ENCODE measurements at regions of chr20 and their contacts with region 1.

Region 1: GRCh38 chr20:50509935-50510705 is at the start of gene PTPN1:
- DNase-seq: peak; percentile 100
- H3K4me3 ChIP-seq: peak within 1 kb of the TSS; percentile 98
- H3K4me3 Mint-ChIP-seq: peak within 1 kb of the TSS; percentile 99
- H3K27ac Mint-ChIP-seq: peak within 1 kb of the TSS; percentile 97
- H3K4me1 ChIP-seq: peaks cover 36% of the 10 kb centered on the region
- H3K4me1 Mint-ChIP-seq: peaks cover 22% of the 10 kb centered on the region
- H3K27me3 ChIP-seq: no peaks in the 10 kb centered on the region
- H3K27me3 Mint-ChIP-seq: no peaks in the 10 kb centered on the region
- CTCF ChIP-seq: peak in 1 of 2 experiments; percentile 13
- total RNA-seq, gene PTPN1: 65.0 and 65.2 TPM in 2 replicates

Region 2: DNA sequence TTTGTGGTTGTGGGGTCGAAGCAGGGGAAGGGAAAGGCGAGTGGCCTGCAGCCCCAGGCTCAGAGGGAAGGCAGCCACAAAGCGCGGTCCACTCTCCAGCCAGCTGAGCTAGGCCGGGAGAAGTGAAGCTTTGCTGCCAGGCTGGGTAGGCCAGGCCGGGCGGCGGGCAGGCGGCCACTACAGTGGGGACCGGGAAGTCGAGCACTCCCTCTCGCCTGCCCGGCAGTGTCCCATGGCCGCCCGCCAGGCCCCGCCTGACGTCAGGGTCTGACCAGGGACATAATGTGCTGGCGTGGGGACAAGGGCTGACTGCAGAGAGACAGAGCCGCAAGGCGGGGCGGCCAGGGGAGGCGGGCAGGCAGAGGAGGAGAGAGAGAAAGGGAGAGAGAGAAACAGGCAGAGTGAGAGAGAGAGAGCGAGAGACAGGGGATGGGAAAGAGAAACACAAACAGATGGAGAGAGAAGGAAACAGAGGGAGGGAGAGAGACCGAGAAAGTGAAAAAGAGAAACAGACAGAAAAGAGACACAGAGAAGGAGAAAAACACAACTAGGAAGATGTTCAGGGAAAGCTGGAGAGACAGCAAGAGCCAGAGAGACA is 94.5 kb before region 1 on chr20:
- CTCF ChIA-PET with region 1: no interaction called
- POLR2A ChIA-PET with region 1: no interaction called
- intact Hi-C with region 1: no loop called
- DNase-seq: peak in 1 of 2 experiments; percentile 45
- H3K4me3 ChIP-seq: no peak overlapping the region
- H3K4me3 Mint-ChIP-seq: no peak overlapping the region
- H3K27ac Mint-ChIP-seq: peak overlapping the region; percentile 32
- H3K4me1 ChIP-seq: peaks cover 28% of the 10 kb centered on the region
- H3K4me1 Mint-ChIP-seq: peaks cover 35% of the 10 kb centered on the region
- H3K27me3 ChIP-seq: no peaks in the 10 kb centered on the region
- H3K27me3 Mint-ChIP-seq: no peaks in the 10 kb centered on the region
- CTCF ChIP-seq: no peak

Region 3: GRCh38 chr20:50438986-50439407 is 71.1 kb before region 1 on chr20:
- CTCF ChIA-PET with region 1: no interaction called
- POLR2A ChIA-PET with region 1: no interaction called
- intact Hi-C with region 1: no loop called
- DNase-seq: peak in 1 of 2 experiments; percentile 76
- H3K4me3 ChIP-seq: no peak overlapping the region
- H3K4me3 Mint-ChIP-seq: no peak overlapping the region
- H3K27ac Mint-ChIP-seq: no peak overlapping the region
- H3K4me1 ChIP-seq: peaks cover 53% of the 10 kb centered on the region
- H3K4me1 Mint-ChIP-seq: peaks cover 39% of the 10 kb centered on the region
- H3K27me3 ChIP-seq: no peaks in the 10 kb centered on the region
- H3K27me3 Mint-ChIP-seq: no peaks in the 10 kb centered on the region
- CTCF ChIP-seq: no peak

Region 4: DNA sequence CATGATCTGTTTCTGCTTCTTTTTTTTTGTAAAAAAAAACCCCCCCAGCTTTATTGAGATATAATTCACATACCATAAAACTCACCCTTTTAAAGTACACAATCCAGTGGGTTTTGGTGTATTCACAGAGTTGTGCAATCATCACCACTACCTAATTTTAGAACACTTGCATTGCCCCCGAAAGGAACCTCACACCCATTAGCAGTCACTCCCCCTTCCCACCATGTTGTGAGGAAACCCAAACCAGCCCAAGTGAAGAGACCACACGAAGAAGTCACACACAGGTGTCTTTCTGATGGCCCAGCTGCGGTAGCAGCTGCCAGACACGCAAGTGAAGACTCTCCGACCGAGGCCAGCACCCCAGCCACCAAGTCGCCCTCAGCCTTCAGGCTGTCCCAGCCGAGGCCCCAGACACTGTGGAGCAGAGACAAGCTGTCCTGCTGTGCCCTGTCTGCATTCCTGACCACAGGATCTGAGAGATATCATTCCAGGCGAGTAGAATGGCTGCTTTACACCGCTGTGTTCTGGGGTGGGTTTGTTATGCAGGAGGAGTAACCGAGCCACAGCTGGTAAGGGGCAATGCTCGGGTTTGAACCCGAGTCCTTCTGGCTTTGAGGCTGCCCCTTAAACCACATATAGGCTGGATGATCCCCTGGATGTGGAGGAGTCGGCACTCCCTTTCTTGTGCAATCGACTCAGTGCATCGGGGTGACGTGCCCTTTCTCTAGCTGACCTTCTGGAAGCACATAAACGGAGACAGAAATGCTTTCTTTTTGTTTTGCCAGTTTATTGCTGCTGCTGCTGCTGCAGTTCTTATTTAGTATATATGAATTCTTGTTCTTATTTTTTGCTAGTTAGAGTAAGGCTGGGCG is 59.0 kb before region 1 on chr20:
- CTCF ChIA-PET with region 1: no interaction called
- POLR2A ChIA-PET with region 1: no interaction called
- intact Hi-C with region 1: no loop called
- DNase-seq: peak; percentile 80 to 89
- H3K4me3 ChIP-seq: no peak overlapping the region
- H3K4me3 Mint-ChIP-seq: peak overlapping the region; percentile 62
- H3K27ac Mint-ChIP-seq: peak overlapping the region; percentile 85
- H3K4me1 ChIP-seq: peaks cover 75% of the 10 kb centered on the region
- H3K4me1 Mint-ChIP-seq: peaks cover 75% of the 10 kb centered on the region
- H3K27me3 ChIP-seq: no peaks in the 10 kb centered on the region
- H3K27me3 Mint-ChIP-seq: no peaks in the 10 kb centered on the region
- CTCF ChIP-seq: no peak

Region 5: DNA sequence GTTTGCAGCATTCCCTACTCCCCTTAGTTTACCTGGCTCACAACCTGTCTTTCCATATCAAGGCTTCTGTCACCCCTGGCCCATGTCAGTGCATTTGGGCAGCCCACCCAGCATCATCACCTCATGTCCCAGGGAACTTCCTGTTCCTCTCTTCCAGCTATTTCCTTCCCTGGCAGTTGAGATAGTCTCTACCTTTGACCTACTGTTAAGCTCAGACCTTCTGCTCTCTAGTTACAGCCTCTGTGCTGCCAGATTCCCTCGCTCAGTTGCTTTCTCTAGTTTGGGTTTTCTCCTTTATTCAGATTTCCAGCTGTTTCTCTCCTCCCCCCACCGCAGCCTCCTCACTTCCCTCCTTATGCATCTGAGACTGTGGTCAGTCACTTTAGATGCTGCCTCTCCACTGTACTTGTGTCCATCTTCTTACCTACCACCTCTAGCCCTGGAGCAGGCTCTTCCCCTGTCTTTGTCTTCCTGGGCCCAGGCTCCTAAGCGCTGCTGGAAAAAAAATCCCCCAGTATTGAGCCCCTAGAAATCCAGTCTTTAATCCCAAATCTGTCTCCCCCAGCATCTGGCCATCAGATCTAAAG is 16.4 kb after region 1 on chr20:
- CTCF ChIA-PET with region 1: interaction called, 14 read pairs
- POLR2A ChIA-PET with region 1: no interaction called
- intact Hi-C with region 1: no loop called
- DNase-seq: no peak
- H3K4me3 ChIP-seq: no peak overlapping the region
- H3K4me3 Mint-ChIP-seq: no peak overlapping the region
- H3K27ac Mint-ChIP-seq: no peak overlapping the region
- H3K4me1 ChIP-seq: peaks cover 5% of the 10 kb centered on the region; the same call in 1 of the 2 replicates
- H3K4me1 Mint-ChIP-seq: peaks cover 14% of the 10 kb centered on the region
- H3K27me3 ChIP-seq: no peaks in the 10 kb centered on the region
- H3K27me3 Mint-ChIP-seq: no peaks in the 10 kb centered on the region
- CTCF ChIP-seq: no peak

Region 6: GRCh38 chr20:50538261-50538660 is 28.1 kb after region 1 on chr20:
- CTCF ChIA-PET with region 1: no interaction called
- POLR2A ChIA-PET with region 1: interaction called, 4 read pairs
- intact Hi-C with region 1: loop called (anchors 1 kb)
- DNase-seq: peak in 1 of 2 experiments; percentile 55
- H3K4me3 ChIP-seq: no peak overlapping the region
- H3K4me3 Mint-ChIP-seq: no peak overlapping the region
- H3K27ac Mint-ChIP-seq: peak overlapping the region; percentile 13
- H3K4me1 ChIP-seq: peaks cover 55% of the 10 kb centered on the region
- H3K4me1 Mint-ChIP-seq: peaks cover 45% of the 10 kb centered on the region
- H3K27me3 ChIP-seq: no peaks in the 10 kb centered on the region
- H3K27me3 Mint-ChIP-seq: no peaks in the 10 kb centered on the region
- CTCF ChIP-seq: no peak

Region 7: DNA sequence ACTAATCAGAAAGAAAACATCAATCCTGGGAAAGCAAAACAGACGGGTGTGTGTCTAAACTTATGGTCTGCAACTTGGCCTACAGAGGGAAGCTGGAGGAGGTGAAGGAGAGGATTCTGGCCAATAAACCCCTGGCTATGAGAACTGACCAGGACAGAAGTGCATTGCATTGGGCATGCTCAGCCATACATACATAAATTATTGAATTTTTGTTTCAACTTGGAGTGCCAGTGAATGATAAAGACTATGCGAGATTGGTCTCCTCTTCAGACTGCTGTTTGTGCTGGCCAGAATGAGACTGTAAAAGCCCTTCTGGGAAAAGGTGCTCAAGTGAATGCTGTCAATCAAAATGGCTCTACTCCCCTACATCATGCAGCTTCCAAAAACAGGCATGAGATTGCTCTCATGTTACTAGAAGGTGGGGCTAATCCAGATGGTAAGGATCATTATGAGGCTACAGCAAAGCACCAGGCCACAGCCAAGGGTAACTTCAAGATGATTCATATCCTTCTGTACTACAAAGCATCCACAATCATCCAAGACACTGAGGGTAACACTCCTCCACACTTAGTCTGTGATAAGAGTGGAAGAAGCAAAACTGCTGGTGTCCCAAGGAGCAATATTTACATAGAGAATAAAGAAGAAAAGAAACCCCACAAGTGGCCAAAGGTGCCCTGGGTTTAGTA is 403.7 kb after region 1 on chr20:
- CTCF ChIA-PET with region 1: no interaction called
- POLR2A ChIA-PET with region 1: interaction called, 3 read pairs
- intact Hi-C with region 1: loop called (anchors 10 kb)
- DNase-seq: no peak
- H3K4me3 ChIP-seq: no peak overlapping the region
- H3K4me3 Mint-ChIP-seq: no peak overlapping the region
- H3K27ac Mint-ChIP-seq: peak overlapping the region; percentile 75
- H3K4me1 ChIP-seq: peaks cover 64% of the 10 kb centered on the region
- H3K4me1 Mint-ChIP-seq: peaks cover 82% of the 10 kb centered on the region
- H3K27me3 ChIP-seq: no peaks in the 10 kb centered on the region
- H3K27me3 Mint-ChIP-seq: no peaks in the 10 kb centered on the region
- CTCF ChIP-seq: no peak

Measured in Caco-2 (cell line).